Activated naive CD4-positive, alpha-beta T cell treated with anti-CD3 and anti-CD28 coated beads for 36 hours (primary cell): ENCODE measurements at regions of chr4 and their contacts with region 1.

Region 1: GRCh38 chr4:39977489-39978377 is at the start of gene PDS5A:
- DNase-seq: peak; percentile 91
- H3K4me3 Mint-ChIP-seq: peak within 1 kb of the TSS; percentile 93
- H3K27ac Mint-ChIP-seq: peak within 1 kb of the TSS; percentile 96
- H3K4me1 Mint-ChIP-seq: peaks cover 33% of the 10 kb centered on the region
- H3K27me3 Mint-ChIP-seq: no peaks in the 10 kb centered on the region
- total RNA-seq, gene PDS5A: 86.8 to 89.1 TPM

Region 2: DNA sequence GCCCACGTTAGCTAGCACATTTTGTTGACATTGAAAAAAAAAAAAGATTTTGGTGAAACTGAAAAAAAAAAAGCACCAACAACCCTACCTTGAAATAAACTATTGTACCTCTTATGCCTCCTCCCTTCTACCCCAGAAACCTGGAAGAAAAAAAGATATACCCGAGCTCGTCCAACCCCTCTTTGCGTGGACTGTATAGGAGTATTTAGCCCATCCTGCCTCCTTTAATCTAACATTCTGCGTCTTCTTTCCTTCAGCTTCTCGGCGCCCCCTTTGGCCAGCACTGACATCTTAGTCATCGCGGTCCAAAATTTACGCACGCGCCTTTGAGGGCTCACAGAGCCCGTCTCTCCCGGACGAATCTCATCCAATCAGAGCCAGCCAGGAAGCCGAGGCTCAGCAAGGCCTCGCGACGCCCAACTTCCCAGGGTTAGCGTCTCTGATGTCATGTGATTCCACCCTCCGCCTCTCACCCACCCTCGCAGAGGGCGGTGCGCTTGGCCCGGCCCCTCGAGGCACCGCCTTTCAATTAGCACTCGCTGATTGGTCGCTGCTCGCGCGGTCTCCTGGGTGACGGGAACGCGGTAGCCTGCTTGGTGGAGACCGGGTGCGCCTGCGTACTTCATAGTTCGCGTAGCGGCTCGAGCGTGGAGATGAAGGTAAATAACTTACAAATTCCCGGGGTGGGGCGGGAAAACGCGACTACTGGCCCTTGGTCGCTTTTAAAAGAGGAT is 795.7 kb before region 1 on chr4 and contains the start of gene WDR19:
- CTCF ChIA-PET with region 1: no interaction called
- intact Hi-C with region 1: loop called (anchors 1 kb)
- DNase-seq: peak; percentile 99
- H3K4me3 Mint-ChIP-seq: no peak within 1 kb of the TSS
- H3K27ac Mint-ChIP-seq: no peak within 1 kb of the TSS
- H3K4me1 Mint-ChIP-seq: peaks cover 6% of the 10 kb centered on the region
- H3K27me3 Mint-ChIP-seq: no peaks in the 10 kb centered on the region
- total RNA-seq, gene WDR19: 12.9 to 18.9 TPM

Region 3: GRCh38 chr4:39469429-39470077 is 508.2 kb before region 1 on chr4:
- CTCF ChIA-PET with region 1: interaction called, 5 read pairs
- intact Hi-C with region 1: loop called (anchors 1 kb)
- DNase-seq: peak; percentile 24
- H3K4me3 Mint-ChIP-seq: no peak overlapping the region
- H3K27ac Mint-ChIP-seq: peak overlapping the region; percentile 37
- H3K4me1 Mint-ChIP-seq: peaks cover 12% of the 10 kb centered on the region
- H3K27me3 Mint-ChIP-seq: no peaks in the 10 kb centered on the region

Region 4: GRCh38 chr4:39638354-39639240 is 339.1 kb before region 1 on chr4 and contains the start of gene SMIM14:
- CTCF ChIA-PET with region 1: no interaction called
- intact Hi-C with region 1: loop called (anchors 2 kb)
- DNase-seq: peak; percentile 93
- H3K4me3 Mint-ChIP-seq: peak within 1 kb of the TSS; percentile 85
- H3K27ac Mint-ChIP-seq: peak within 1 kb of the TSS; percentile 69
- H3K4me1 Mint-ChIP-seq: peaks cover 24% of the 10 kb centered on the region
- H3K27me3 Mint-ChIP-seq: no peaks in the 10 kb centered on the region
- total RNA-seq, gene SMIM14: 2.7 to 3.9 TPM

Region 5: DNA sequence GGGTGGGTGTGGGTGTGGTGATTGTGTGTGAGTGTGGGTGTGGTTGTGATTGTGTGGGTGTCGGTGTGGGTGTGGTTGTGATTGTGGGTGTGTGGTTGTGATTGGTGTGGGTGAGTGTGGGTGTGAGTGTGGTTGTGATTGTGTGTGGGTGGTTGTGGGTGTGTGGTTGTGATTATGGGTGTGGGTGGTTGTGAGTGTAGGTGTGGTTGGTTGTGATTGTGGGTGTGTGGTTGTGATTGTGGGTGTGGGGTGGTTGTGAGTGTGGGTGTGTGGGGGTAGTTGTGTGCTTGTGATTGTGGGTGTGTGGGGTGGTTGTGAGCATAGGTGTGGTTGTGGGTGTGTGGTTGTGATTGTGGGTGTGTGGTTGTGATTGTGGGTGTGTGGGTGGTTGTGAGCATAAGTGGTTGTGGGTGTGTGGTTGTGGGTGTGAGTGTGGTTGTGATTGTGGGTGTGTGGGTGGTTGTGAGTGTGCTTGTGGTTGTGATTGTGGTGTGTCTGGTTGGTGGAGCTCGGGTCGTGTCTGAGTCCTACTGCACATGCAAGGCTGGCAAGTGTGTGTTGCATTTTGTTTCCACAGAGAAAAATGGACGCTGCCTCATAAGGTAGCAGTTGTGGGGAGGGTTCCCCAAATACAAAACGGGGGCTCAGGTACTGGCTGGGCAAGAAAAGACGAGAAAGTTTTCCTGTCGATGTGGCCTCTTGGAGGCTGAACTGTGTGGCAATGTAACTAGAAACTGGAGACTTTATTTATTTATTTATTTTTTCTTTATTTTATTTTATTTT is 163.1 kb before region 1 on chr4:
- CTCF ChIA-PET with region 1: no interaction called
- intact Hi-C with region 1: loop called (anchors 5 kb)
- DNase-seq: no peak
- H3K4me3 Mint-ChIP-seq: no peak overlapping the region
- H3K27ac Mint-ChIP-seq: no peak overlapping the region
- H3K4me1 Mint-ChIP-seq: no peaks in the 10 kb centered on the region
- H3K27me3 Mint-ChIP-seq: no peaks in the 10 kb centered on the region

Region 6: GRCh38 chr4:40325189-40326019 is 347.7 kb after region 1 on chr4:
- CTCF ChIA-PET with region 1: no interaction called
- intact Hi-C with region 1: loop called (anchors 1 kb)
- DNase-seq: peak; percentile 82
- H3K4me3 Mint-ChIP-seq: no peak overlapping the region
- H3K27ac Mint-ChIP-seq: no peak overlapping the region
- H3K4me1 Mint-ChIP-seq: peaks cover 27% of the 10 kb centered on the region
- H3K27me3 Mint-ChIP-seq: no peaks in the 10 kb centered on the region